ENCODE measurements at regions of chr11 and their contacts with region 1.

Region 1: DNA sequence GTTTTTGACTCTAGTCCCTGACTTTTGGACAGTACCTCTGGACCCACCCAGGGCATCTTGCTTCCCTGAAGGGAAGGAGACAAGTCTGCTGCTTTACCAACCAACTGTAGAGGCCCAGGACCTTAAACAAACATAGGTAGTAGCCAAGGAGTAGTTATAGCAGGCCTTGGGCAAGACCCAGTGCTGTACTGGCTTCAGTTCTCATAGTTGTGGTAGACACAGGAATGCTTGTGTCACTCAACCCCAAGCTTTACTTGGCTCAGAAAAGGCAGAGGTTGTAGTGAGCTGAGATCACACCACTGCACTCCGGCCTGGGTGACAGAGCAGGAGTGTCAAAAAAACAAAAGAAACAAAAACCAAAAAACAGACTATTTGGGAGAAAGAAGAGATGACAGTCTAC is 21.3 kb upstream of the OR52M1 start:
- DNase-seq: no peak
- H3K4me3 ChIP-seq: no peak overlapping the region
- H3K27ac ChIP-seq: no peak overlapping the region
- H3K27me3 ChIP-seq: no peaks in the 10 kb centered on the region
- CTCF ChIP-seq: no peak

Region 2: GRCh38 chr11:4511282-4512245 is 12.1 kb before region 1 on chr11:
- CTCF ChIA-PET with region 1: no interaction called
- POLR2A ChIA-PET with region 1: no interaction called
- DNase-seq: no peak
- H3K4me3 ChIP-seq: no peak overlapping the region
- H3K27ac ChIP-seq: no peak overlapping the region
- H3K27me3 ChIP-seq: no peaks in the 10 kb centered on the region
- CTCF ChIP-seq: no peak

Region 3: DNA sequence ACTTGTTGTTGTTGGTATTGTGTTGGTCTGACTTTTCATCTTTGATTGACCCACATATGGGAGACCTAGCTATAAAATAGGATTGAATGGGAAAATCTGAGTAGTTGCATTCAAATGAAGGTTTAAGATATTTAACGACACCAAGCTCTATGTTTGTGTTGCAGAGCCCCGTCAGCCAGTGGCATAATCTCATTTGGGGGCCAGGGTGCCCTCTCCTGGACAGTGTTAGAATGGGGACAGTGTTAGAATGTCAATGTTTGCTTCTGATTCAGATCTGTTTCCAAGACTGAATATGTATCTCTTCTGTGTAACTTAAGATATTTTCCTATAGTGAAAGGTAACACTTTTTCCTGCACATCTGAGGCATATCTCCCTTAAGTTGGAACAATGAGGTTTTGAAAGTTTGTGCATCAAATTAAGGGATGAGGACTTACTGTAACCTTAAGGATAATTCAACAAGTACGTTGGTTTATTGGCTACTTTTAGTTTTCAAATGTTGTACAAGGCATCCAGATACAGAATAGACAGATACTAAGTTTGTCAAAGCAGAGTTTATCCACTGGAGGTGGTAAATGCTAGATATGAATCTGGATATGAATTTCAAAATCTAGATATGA is 16.0 kb after region 1 on chr11:
- CTCF ChIA-PET with region 1: interaction called, 12 read pairs
- POLR2A ChIA-PET with region 1: no interaction called
- DNase-seq: peak; percentile 4
- H3K4me3 ChIP-seq: no peak overlapping the region
- H3K27ac ChIP-seq: no peak overlapping the region
- H3K27me3 ChIP-seq: no peaks in the 10 kb centered on the region
- CTCF ChIP-seq: peak; percentile 65

Region 4: DNA sequence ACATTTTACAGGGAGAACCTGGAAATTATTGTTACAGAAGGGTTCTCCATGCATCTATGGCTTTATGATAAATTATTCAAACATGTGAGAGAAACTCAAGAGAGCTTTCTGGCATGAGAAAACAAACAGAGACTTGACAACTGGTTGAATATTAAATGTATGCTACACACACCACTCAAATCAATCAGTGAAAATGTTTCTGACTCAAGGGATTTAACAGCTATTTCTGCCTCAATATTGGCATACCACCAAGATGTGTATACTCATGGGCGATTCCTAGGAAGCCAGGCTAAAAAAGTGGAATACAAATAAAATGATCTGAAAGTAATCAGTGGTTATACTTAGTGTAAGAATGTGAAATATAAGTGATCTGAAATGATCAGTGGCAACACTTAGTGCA is 342.2 kb after region 1 on chr11:
- CTCF ChIA-PET with region 1: no interaction called
- POLR2A ChIA-PET with region 1: no interaction called
- DNase-seq: no peak
- H3K4me3 ChIP-seq: no peak overlapping the region
- H3K27ac ChIP-seq: no peak overlapping the region
- H3K27me3 ChIP-seq: no peaks in the 10 kb centered on the region
- CTCF ChIP-seq: no peak